Activated CD8-positive, alpha-beta T cell treated with anti-CD3 and anti-CD28 coated beads for 36 hours (primary cell): ENCODE measurements at regions of chr2 and their contacts with region 1.

Region 1: GRCh38 chr2:15177103-15177502 is 384.0 kb downstream of the NBAS start:
- DNase-seq: peak; percentile 87
- ATAC-seq: peak; percentile 93
- H3K4me3 Mint-ChIP-seq: no peak overlapping the region
- H3K27ac Mint-ChIP-seq: no peak overlapping the region
- H3K4me1 Mint-ChIP-seq: peaks cover 47% of the 10 kb centered on the region
- H3K27me3 Mint-ChIP-seq: peaks cover 16% of the 10 kb centered on the region
- CTCF ChIP-seq: no peak

Region 2: GRCh38 chr2:15142069-15142873 is 34.8 kb before region 1 on chr2:
- CTCF ChIA-PET with region 1: no interaction called
- POLR2A ChIA-PET with region 1: no interaction called
- intact Hi-C with region 1: loop called (anchors 5 kb)
- DNase-seq: peak; percentile 91
- ATAC-seq: peak; percentile 97
- H3K4me3 Mint-ChIP-seq: peak overlapping the region; percentile 37
- H3K27ac Mint-ChIP-seq: peak overlapping the region; percentile 87
- H3K4me1 Mint-ChIP-seq: peaks cover 23% of the 10 kb centered on the region
- H3K27me3 Mint-ChIP-seq: no peaks in the 10 kb centered on the region
- CTCF ChIP-seq: no peak

Region 3: GRCh38 chr2:15313657-15314056 is 136.6 kb after region 1 on chr2:
- CTCF ChIA-PET with region 1: no interaction called
- POLR2A ChIA-PET with region 1: no interaction called
- intact Hi-C with region 1: loop called (anchors 10 kb)
- DNase-seq: peak; percentile 4
- ATAC-seq: peak; percentile 58
- H3K4me3 Mint-ChIP-seq: no peak overlapping the region
- H3K27ac Mint-ChIP-seq: no peak overlapping the region
- H3K4me1 Mint-ChIP-seq: peaks cover 50% of the 10 kb centered on the region
- H3K27me3 Mint-ChIP-seq: no peaks in the 10 kb centered on the region
- CTCF ChIP-seq: no peak

Region 4: DNA sequence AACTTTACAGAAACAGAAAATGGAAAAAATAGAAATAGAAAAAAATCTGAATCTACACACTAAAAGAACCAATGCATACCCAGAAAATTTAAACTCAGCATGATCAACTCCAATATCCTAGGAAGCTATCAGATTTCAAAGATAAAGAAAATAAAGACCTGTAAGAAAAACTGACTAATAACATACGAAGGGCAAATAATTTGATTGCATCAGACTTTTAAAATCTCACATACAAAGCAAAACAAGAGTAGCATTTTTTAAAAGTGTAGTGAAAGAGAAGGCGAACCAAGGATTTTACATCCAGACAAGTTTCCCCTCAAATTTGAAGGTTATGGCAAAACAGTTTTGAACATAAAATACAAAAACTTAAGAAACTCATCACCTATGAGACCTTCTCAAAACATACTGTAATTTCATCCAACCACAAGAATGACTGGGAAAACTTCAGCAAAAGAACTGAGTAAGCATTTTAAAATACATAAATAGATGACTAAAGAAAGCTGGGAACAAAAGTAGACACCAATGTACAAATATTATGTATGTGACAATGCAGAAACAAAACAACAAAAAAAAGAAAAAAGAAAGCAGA is 329.2 kb after region 1 on chr2:
- CTCF ChIA-PET with region 1: no interaction called
- POLR2A ChIA-PET with region 1: no interaction called
- intact Hi-C with region 1: no loop called
- DNase-seq: no peak
- ATAC-seq: no peak
- H3K4me3 Mint-ChIP-seq: no peak overlapping the region
- H3K27ac Mint-ChIP-seq: no peak overlapping the region
- H3K4me1 Mint-ChIP-seq: peaks cover 11% of the 10 kb centered on the region
- H3K27me3 Mint-ChIP-seq: no peaks in the 10 kb centered on the region
- CTCF ChIP-seq: no peak

Region 5: DNA sequence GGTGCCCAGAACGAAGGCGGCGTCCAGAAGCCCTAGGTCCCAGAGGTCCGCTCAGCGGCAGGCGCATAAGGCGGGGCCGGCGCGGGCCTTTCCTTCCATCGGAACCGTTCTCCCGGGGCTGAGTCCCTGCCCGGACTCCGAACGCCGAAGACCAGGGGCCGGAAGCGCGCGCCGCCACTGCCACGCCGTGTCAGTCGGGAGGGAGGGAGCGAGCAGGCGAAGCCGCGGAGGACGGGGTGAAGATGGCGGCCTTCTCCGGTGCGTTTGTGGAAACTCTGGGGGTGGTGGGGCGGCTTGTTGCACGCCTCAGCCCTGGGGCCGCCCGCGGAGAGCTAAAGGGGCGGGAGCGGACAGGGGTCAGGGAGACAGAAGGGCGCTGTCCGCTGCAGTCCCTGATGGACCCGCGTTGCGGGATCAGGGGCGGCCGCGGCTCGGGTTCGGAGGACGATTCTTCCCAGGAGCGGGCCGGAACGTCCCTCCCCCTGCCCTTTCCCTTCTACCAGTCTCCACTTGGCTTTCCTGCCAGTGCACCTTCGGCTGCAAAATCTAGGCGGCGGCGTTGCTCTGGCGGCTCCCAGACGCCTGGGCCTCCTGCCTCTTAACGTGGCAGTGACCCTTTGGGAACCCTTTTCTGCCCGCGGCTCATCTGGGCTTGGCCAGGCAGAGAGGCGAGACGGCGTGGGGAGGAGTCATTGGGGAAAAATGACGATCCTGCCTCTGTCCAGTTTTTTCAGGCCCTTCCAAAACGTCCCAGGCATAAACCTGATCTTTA is 414.8 kb after region 1 on chr2 and contains the start of gene DDX1:
- CTCF ChIA-PET with region 1: no interaction called
- POLR2A ChIA-PET with region 1: interaction called, 3 read pairs
- intact Hi-C with region 1: loop called (anchors 10 kb)
- DNase-seq: peak; percentile 84
- ATAC-seq: peak; percentile 97
- H3K4me3 Mint-ChIP-seq: peak within 1 kb of the TSS; percentile 86
- H3K27ac Mint-ChIP-seq: peak within 1 kb of the TSS; percentile 93
- H3K4me1 Mint-ChIP-seq: peaks cover 36% of the 10 kb centered on the region
- H3K27me3 Mint-ChIP-seq: no peaks in the 10 kb centered on the region
- CTCF ChIP-seq: no peak
- total RNA-seq, gene DDX1: 90.3 to 92.5 TPM